Activated CD4-positive, alpha-beta memory T cell treated with anti-CD3 and anti-CD28 coated beads, Interleukin-2, amount 10 ng/mL, durations not matched to agents 7 days and 5 days (primary cell): ENCODE measurements at regions of chr3 and their contacts with region 1.

Region 1: GRCh38 chr3:66378256-66378823 is 122.5 kb downstream of the LRIG1 start:
- DNase-seq: peak; percentile 37
- H3K4me3 Mint-ChIP-seq: no peak overlapping the region
- H3K27ac Mint-ChIP-seq: peak overlapping the region; percentile 82
- H3K4me1 Mint-ChIP-seq: peaks cover 13% of the 10 kb centered on the region
- H3K27me3 Mint-ChIP-seq: no peaks in the 10 kb centered on the region

Region 2: GRCh38 chr3:66276705-66277274 is 101.5 kb before region 1 on chr3:
- CTCF ChIA-PET with region 1: interaction called, 24 read pairs
- POLR2A ChIA-PET with region 1: interaction called, 7 read pairs
- DNase-seq: peak; percentile 72
- H3K4me3 Mint-ChIP-seq: no peak overlapping the region
- H3K27ac Mint-ChIP-seq: no peak overlapping the region
- H3K4me1 Mint-ChIP-seq: peaks cover 25% of the 10 kb centered on the region
- H3K27me3 Mint-ChIP-seq: no peaks in the 10 kb centered on the region

Region 3: DNA sequence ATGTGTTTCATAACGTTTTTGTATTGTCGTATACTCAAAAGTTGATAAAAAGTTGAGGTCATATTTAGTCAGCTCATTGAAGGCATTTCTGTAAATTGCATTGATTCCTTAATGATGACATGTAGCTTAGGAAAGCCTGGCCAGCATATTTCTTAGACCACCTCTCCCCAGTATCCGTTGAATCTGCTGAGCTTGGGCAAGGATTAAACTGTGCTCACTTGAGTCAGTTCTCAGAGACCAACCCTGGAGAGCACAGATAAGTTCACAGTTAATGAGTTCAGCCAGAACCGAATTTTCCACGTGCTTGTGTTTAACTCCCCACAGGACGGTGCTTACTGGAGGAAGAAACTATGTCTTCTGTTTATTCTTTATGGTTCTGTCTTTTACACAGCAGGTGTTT is 24.8 kb before region 1 on chr3:
- CTCF ChIA-PET with region 1: interaction called, 21 read pairs
- POLR2A ChIA-PET with region 1: interaction called, 3 read pairs
- DNase-seq: no peak
- H3K4me3 Mint-ChIP-seq: no peak overlapping the region
- H3K27ac Mint-ChIP-seq: no peak overlapping the region
- H3K4me1 Mint-ChIP-seq: peaks cover 29% of the 10 kb centered on the region
- H3K27me3 Mint-ChIP-seq: no peaks in the 10 kb centered on the region

Region 4: DNA sequence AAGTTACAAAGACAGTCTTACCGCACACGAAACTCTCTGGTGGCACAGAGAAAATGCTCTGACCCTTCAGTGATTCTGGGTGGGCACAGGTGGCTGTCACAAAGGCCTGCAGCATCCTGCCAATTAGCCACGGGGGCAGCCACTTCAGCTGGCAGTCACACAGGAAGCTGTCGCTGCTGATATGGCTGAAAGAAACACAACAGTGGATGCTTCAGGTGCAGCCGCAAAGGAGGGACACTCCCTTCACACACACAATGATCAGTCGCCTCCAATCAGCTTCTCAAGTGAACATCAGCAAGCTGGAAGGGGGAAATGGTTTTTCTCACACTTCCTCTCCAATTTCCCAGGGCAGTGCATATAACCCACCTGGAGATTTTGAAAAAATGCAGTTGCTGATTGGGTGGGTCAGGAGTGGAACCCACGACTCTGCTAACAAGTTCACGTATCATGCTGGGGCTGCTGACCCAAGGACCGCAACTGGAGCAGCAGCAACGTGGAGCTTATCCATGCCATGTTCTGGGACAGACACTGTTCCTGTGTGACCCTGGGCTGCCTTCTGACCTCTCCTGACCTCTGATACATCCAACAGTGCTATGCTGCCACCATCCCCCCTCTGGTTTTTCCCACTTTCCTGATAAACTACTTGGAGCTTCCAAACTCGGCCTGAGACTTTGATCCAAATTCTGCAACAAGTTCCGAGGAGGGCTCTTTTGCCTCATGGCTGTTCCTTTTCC is 15.8 kb after region 1 on chr3:
- CTCF ChIA-PET with region 1: interaction called, 35 read pairs
- POLR2A ChIA-PET with region 1: interaction called, 15 read pairs
- DNase-seq: peak; percentile 73
- H3K4me3 Mint-ChIP-seq: peak overlapping the region; percentile 75
- H3K27ac Mint-ChIP-seq: peak overlapping the region; percentile 97
- H3K4me1 Mint-ChIP-seq: peaks cover 40% of the 10 kb centered on the region
- H3K27me3 Mint-ChIP-seq: no peaks in the 10 kb centered on the region

Region 5: DNA sequence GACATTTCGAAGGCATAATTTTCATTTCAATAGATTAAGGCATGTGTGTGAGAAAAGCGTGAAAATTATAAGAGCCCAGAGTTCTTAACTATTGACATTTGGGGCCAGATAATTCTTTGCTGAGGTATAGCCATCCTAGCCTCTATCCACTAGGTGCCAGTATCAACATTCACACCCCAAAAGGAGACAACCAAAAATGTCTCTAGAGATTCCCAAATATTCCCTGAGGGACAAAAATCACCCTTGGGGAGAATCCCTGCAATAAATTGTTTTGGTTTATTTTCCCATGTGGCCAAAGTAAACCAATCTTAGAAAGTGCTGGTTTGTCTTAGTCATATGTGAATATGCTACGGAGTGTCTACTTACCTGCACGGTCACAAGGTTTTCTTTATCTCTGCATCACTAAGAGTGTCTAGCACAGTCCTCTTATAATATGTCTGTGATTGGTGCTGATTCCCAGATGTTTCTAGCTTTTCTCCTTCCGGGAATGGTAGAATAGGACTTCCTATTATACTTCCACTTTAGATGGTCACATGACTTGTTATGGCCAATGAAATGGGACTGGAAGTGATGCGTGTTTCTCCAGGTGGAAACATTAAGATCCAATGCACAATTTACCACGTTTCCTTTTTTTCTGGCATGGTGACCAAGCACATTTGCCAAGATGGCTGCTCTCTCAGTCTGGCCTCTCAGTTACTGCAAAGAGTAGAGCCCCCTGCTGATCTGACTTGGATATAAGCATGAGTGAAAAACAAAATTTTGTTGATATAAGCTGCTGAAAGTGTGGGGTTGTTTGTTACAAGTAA is 611.7 kb after region 1 on chr3:
- CTCF ChIA-PET with region 1: no interaction called
- POLR2A ChIA-PET with region 1: no interaction called
- DNase-seq: no peak
- H3K4me3 Mint-ChIP-seq: no peak overlapping the region
- H3K27ac Mint-ChIP-seq: no peak overlapping the region
- H3K4me1 Mint-ChIP-seq: no peaks in the 10 kb centered on the region
- H3K27me3 Mint-ChIP-seq: peaks cover 16% of the 10 kb centered on the region